HepG2 (cell line): ENCODE measurements at regions of chr6 and their contacts with region 1.

Region 1: GRCh38 chr6:91081452-91082067 is 494.7 kb upstream of the MAP3K7 start:
- DNase-seq: peak; percentile 25
- ATAC-seq: peak; percentile 76
- H3K4me3 ChIP-seq: no peak overlapping the region
- H3K27ac ChIP-seq: no peak overlapping the region
- H3K4me1 ChIP-seq: no peaks in the 10 kb centered on the region
- H3K27me3 ChIP-seq: no peaks in the 10 kb centered on the region
- CTCF ChIP-seq: peak; percentile 76
- EP300 ChIP-seq: no peak
- POLR2A ChIP-seq: no peak
- RAD21 ChIP-seq: peak; percentile 45; the same call in 1 of the 2 replicates

Region 2: DNA sequence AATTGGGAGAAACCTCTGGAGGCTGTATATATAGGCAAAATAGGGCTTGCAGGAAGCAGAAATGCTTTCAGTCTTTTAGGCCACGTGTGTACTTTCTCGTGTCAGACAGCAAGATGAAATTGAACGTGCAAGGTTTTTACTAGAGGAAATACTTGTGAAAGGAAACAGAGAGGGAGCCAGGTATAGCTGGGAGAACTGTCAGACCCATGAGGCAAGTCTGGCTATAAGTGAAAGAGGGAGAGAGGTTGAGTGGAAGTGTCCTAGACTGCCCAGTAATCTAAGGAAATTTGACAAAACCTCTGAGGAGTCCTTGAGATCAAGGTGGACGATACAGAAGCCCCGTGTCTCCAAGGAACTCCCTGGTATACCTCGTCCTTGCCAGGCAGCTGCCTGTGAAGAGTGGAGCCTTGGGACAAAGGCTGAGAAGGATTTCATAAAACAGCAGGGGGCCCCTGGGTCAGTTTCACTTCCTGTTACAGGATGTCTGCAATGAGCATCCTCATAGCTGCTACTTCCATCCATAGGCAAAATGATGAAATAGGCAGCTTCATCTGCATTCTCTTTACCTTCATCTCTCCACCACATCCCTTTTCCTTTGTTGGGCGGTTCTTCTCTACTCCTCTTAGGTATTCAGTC is 380.3 kb before region 1 on chr6:
- CTCF ChIA-PET with region 1: no interaction called
- POLR2A ChIA-PET with region 1: no interaction called
- in situ Hi-C with region 1: no loop called
- intact Hi-C with region 1: no loop called
- DNase-seq: no peak
- ATAC-seq: peak; percentile 41; the same call in 1 of the 3 replicates
- H3K4me3 ChIP-seq: no peak overlapping the region
- H3K27ac ChIP-seq: no peak overlapping the region
- H3K4me1 ChIP-seq: no peaks in the 10 kb centered on the region
- H3K27me3 ChIP-seq: no peaks in the 10 kb centered on the region
- CTCF ChIP-seq: no peak
- EP300 ChIP-seq: no peak
- POLR2A ChIP-seq: no peak
- RAD21 ChIP-seq: no peak

Region 3: GRCh38 chr6:91387290-91388062 is 305.9 kb after region 1 on chr6:
- CTCF ChIA-PET with region 1: no interaction called
- POLR2A ChIA-PET with region 1: no interaction called
- in situ Hi-C with region 1: no loop called
- intact Hi-C with region 1: loop called (anchors 5 kb)
- DNase-seq: no peak
- ATAC-seq: no peak; the same call in 1 of the 3 replicates
- H3K4me3 ChIP-seq: no peak overlapping the region
- H3K27ac ChIP-seq: no peak overlapping the region
- H3K4me1 ChIP-seq: no peaks in the 10 kb centered on the region
- H3K27me3 ChIP-seq: no peaks in the 10 kb centered on the region
- CTCF ChIP-seq: no peak
- EP300 ChIP-seq: no peak
- POLR2A ChIP-seq: no peak
- RAD21 ChIP-seq: no peak